ENCODE measurements at regions of chr2 and their contacts with region 1.

Region 1: GRCh38 chr2:69914170-69914960 is 544 bp upstream of the MXD1 start:
- DNase-seq: peak; percentile 100
- ATAC-seq: peak; percentile 89 to 92
- H3K4me3 ChIP-seq: peak overlapping the region; percentile 77 to 87 (median 84)
- H3K27ac ChIP-seq: peak overlapping the region; percentile 96 to 99 (median 98)
- H3K4me1 ChIP-seq: peaks cover 30 to 45% of the 10 kb centered on the region in 2 donors
- H3K27me3 ChIP-seq: no peaks in the 10 kb centered on the region
- CTCF ChIP-seq: peak in 2 of 5 experiments; percentile 10 to 15
- POLR2A ChIP-seq: peak; percentile 72 to 80

Region 2: DNA sequence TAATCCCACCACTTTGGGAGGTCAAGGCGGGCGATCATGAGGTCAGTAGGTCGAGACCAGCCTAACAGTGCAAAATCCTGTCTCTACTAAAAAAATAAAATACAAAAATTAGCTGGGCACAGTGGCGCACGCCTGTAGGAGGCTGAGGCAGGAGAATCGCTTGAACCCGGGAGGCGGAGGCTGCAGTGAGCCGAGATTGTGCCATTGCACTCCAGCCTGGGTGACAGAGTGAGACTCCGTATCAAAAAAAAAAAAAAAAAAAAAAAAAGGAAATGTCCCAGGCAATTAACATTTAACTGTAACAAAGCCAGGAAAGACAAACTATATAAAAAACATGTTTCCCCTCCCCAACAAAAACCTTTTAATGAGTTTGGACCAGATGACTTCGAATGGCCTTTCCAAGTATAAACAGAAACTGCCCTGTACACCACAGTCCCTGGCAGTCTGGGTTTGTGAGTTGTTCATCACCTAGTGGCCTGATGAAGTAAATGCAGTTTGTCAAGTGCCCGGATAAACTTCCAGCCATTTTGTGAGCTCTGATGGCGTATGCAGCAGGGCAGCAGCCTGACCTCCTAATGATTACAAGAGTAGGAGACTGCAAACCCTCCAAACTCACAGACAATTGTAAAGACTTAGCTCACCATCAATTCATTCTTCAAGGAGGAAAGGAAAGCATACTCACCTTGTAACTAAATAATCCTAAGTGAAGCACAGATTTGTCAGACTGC is 156.3 kb after region 1 on chr2:
- in situ Hi-C with region 1: loop called (anchors 5 to 25 kb)
- intact Hi-C with region 1: loop called (anchors 1 kb)
- DNase-seq: peak; percentile 71 to 78
- ATAC-seq: peak; percentile 86
- H3K4me3 ChIP-seq: peak overlapping the region; percentile 6 to 30 (median 19)
- H3K27ac ChIP-seq: peak overlapping the region; percentile 84 to 94 (median 88)
- H3K4me1 ChIP-seq: peaks cover 29 to 35% of the 10 kb centered on the region in 2 donors
- H3K27me3 ChIP-seq: no peaks in the 10 kb centered on the region
- CTCF ChIP-seq: peak; percentile 84 to 94 (median 87)
- POLR2A ChIP-seq: no peak

Region 3: GRCh38 chr2:70115646-70116442 is 201.5 kb after region 1 on chr2:
- in situ Hi-C with region 1: no loop called
- intact Hi-C with region 1: no loop called
- DNase-seq: peak; percentile 76 to 81
- ATAC-seq: peak; percentile 87 to 93
- H3K4me3 ChIP-seq: peak overlapping the region in 2 of 4 donors; percentile 6 to 19
- H3K27ac ChIP-seq: peak overlapping the region; percentile 88 to 95 (median 92)
- H3K4me1 ChIP-seq: peaks cover 52 to 72% of the 10 kb centered on the region in 2 donors
- H3K27me3 ChIP-seq: no peaks in the 10 kb centered on the region
- CTCF ChIP-seq: no peak
- POLR2A ChIP-seq: no peak

Region 4: DNA sequence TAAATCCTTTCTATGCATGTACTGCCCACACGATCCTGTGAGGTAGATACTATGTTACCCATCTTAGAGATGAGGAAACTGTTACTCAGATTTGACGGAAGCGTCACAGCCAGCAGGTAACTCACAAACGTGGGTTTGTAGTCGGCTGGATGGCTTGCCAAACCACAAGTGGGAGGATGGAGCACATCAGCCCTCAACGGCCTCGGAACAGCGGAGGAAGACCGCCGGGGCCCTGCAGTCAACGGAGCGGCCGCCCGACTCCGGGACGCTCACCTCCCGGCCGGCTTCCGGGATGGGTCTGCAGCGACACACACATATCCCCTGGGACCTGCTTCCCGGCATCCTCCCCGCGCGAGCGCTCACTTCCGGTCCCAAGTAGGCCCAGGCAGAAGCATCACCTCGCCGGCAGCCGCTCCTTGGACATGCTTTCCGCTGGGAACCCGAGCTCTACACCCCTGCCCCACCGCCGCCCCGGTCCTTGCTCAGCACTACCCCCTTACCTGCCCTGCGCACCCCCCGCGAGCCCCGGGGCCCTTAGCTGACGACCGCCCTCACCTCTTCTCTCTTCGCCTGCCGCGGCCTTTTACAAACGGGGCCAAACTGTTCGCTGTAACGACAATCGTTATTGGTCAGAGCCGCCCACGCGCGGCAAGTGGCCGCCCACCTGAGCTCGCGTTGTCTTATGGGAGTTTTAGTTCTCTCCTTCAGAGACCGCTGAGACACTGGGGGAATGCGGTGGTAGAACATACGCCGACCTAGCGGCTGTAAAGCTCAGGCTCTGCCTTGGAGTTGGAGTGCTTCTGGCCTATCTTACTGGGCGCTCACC is 276.3 kb after region 1 on chr2 and contains the start of gene C2orf42:
- in situ Hi-C with region 1: no loop called
- intact Hi-C with region 1: loop called (anchors 2 kb)
- DNase-seq: peak; percentile 94 to 97
- ATAC-seq: peak; percentile 98
- H3K4me3 ChIP-seq: peak within 1 kb of the TSS; percentile 72 to 96 (median 88)
- H3K27ac ChIP-seq: peak within 1 kb of the TSS; percentile 92 to 99 (median 92)
- H3K4me1 ChIP-seq: peaks cover 4 to 6% of the 10 kb centered on the region in 2 donors
- H3K27me3 ChIP-seq: no peaks in the 10 kb centered on the region
- CTCF ChIP-seq: no peak
- POLR2A ChIP-seq: peak; percentile 91 to 97
- total RNA-seq, gene C2orf42: 6.3 to 10.1 (median 7.3) TPM

Region 5: DNA sequence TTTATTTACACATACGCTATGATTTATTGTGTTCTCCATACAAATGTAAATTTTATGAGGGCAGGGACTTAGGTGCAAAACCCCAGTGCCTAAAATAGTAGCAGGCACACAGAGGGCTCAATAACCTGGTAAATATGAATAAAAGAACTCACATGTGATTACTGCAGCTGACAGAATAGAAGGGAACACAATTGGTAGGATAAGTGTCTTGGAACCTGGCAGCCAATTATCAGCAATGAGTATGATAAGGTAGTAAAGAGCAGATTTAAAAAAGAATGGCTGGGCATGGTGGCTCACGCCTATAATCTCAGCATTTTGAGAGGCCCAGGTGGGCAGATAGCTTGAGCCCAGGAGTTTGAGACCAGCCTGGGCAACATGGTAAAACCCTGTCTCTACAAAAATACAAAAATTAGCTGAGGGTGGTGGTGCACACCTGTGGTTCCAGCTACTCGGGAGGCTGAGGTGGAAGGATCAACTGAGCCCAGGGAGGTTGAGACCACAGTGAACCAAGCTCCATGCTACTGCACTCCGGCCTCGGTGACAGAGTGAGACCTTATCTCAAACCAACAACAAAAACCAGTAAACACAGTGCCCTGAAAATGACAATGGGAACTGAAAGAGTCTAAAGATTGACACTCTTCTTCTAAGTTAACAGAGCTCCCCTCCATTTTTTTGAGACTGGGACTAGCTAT is 369.3 kb after region 1 on chr2:
- in situ Hi-C with region 1: loop called in 2 of 4 experiments (anchors 25 kb)
- intact Hi-C with region 1: no loop called
- DNase-seq: no peak
- ATAC-seq: no peak
- H3K4me3 ChIP-seq: no peak overlapping the region
- H3K27ac ChIP-seq: no peak overlapping the region
- H3K4me1 ChIP-seq: no peaks in the 10 kb centered on the region
- H3K27me3 ChIP-seq: no peaks in the 10 kb centered on the region
- CTCF ChIP-seq: no peak
- POLR2A ChIP-seq: no peak

Measured in gastrocnemius medialis (tissue), 4 donors.